Activated CD4-positive, alpha-beta memory T cell treated with anti-CD3 and anti-CD28 coated beads for 36 hours (primary cell): ENCODE measurements at regions of chr15 and their contacts with region 1.

Region 1: GRCh38 chr15:81265944-81266775 is 57.8 kb downstream of the STARD5 start:
- DNase-seq: peak; percentile 90
- H3K4me3 Mint-ChIP-seq: peak overlapping the region; percentile 54
- H3K27ac Mint-ChIP-seq: no peak overlapping the region
- H3K4me1 Mint-ChIP-seq: peaks cover 18% of the 10 kb centered on the region
- H3K27me3 Mint-ChIP-seq: peaks cover 8% of the 10 kb centered on the region

Region 2: DNA sequence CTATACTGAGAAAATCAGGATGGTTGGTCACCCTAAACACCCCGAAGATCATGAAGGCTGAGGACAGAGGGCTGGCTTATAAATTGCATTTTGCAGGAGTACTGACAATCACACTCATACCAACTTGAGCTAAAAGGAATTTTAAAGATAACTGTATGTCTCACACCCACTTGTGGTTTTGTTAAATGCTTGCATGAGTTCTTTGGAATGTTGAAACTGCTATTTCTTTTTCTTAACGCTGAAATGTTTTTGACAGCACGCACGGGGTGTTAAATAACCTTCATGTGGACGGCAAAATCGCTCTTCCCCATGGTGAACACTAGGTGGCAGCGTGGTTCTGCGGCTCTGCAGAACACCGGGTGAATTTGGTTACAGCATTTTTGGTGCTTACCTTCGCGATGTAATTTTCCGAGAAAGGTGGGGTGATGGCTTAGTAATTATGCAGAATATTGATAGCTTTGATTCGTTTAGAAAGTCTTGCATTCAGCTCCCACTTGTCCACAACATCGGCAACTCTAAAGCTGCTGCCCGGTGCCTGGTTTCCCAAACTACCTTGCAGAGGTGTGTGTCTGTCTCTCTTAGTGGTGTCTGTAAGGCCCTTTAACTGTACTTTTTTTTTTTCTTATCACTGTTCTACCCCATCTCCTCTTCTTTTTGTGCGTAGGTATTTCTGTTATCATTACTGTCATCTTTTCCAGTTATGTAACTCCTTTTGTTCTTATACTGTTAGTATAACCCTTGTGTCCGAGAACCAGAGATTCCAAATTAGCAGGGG is 810.3 kb before region 1 on chr15:
- CTCF ChIA-PET with region 1: interaction called, 10 read pairs
- POLR2A ChIA-PET with region 1: no interaction called
- intact Hi-C with region 1: loop called (anchors 2 kb)
- DNase-seq: peak; percentile 67
- H3K4me3 Mint-ChIP-seq: no peak overlapping the region
- H3K27ac Mint-ChIP-seq: no peak overlapping the region
- H3K4me1 Mint-ChIP-seq: peaks cover 5% of the 10 kb centered on the region
- H3K27me3 Mint-ChIP-seq: peaks cover 12% of the 10 kb centered on the region

Region 3: DNA sequence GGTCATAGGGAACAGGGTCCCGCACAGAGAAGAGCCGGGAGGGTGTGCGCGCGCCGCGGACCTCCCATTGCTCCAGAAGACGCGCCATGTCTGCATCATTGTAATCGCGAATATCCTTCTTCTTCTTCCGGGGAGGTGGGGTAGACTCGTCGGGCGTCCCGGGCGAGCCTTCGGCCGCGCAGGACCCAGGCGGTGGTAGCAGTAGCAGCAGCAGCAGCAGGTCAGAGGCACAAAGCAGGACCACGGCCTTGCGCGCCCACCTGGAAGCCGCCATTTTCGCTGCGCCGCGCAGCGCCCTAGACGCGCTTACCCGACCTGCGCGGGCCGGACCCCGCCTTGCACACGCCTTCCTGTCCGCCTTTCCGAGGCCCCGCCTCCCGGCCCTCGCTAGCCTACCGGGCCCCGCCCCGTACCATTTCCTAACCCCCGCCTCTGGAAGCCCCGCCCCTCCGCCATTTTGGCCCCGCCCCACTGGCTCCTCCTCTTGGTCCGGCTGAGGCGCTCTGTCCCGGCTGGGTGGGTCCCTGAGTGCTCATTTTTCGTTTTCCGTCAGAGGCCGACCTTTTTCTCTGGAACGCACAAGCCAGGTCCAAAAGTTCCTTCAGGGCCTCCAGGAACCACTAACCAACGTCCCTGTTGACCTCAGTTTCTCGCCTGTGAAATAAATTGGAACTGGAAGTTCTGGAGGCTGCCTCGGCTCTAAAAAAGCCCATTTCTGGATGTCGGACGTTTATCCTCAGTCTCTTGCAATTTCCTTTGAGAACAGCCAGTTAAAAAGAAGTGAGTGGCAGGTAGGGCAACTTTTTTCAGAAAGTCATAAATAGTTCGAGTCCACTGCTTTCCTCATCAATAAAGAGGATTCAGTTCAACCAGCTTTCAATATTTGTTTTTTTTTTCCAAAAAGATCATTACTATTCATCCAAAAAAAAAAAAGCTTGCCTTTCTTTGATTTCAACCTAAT is 276.4 kb before region 1 on chr15 and contains the start of gene MESD:
- CTCF ChIA-PET with region 1: interaction called, 27 read pairs
- POLR2A ChIA-PET with region 1: no interaction called
- intact Hi-C with region 1: no loop called
- DNase-seq: peak; percentile 99
- H3K4me3 Mint-ChIP-seq: peak within 1 kb of the TSS; percentile 98
- H3K27ac Mint-ChIP-seq: peak within 1 kb of the TSS; percentile 93
- H3K4me1 Mint-ChIP-seq: peaks cover 51% of the 10 kb centered on the region
- H3K27me3 Mint-ChIP-seq: no peaks in the 10 kb centered on the region
- total RNA-seq, gene MESD: 20.0 to 20.5 TPM

Region 4: GRCh38 chr15:81111510-81112470 is 154.4 kb before region 1 on chr15:
- CTCF ChIA-PET with region 1: interaction called, 217 read pairs
- POLR2A ChIA-PET with region 1: no interaction called
- intact Hi-C with region 1: loop called (anchors 1 kb)
- DNase-seq: no peak
- H3K4me3 Mint-ChIP-seq: no peak overlapping the region
- H3K27ac Mint-ChIP-seq: no peak overlapping the region
- H3K4me1 Mint-ChIP-seq: peaks cover 3% of the 10 kb centered on the region
- H3K27me3 Mint-ChIP-seq: peaks cover 28% of the 10 kb centered on the region

Region 5: GRCh38 chr15:81178365-81178764 is 87.8 kb before region 1 on chr15:
- CTCF ChIA-PET with region 1: interaction called, 11 read pairs
- POLR2A ChIA-PET with region 1: no interaction called
- intact Hi-C with region 1: no loop called
- DNase-seq: no peak
- H3K4me3 Mint-ChIP-seq: no peak overlapping the region
- H3K27ac Mint-ChIP-seq: no peak overlapping the region
- H3K4me1 Mint-ChIP-seq: no peaks in the 10 kb centered on the region
- H3K27me3 Mint-ChIP-seq: peaks cover 10% of the 10 kb centered on the region

Region 6: GRCh38 chr15:81323944-81324881 is 58.1 kb after region 1 on chr15 and contains the start of gene STARD5:
- CTCF ChIA-PET with region 1: interaction called, 24 read pairs
- POLR2A ChIA-PET with region 1: interaction called, 3 read pairs
- intact Hi-C with region 1: no loop called
- DNase-seq: peak; percentile 98
- H3K4me3 Mint-ChIP-seq: peak within 1 kb of the TSS; percentile 100
- H3K27ac Mint-ChIP-seq: peak within 1 kb of the TSS; percentile 76
- H3K4me1 Mint-ChIP-seq: peaks cover 24% of the 10 kb centered on the region
- H3K27me3 Mint-ChIP-seq: no peaks in the 10 kb centered on the region
- total RNA-seq, gene STARD5: 7.3 to 9.1 TPM

Region 7: DNA sequence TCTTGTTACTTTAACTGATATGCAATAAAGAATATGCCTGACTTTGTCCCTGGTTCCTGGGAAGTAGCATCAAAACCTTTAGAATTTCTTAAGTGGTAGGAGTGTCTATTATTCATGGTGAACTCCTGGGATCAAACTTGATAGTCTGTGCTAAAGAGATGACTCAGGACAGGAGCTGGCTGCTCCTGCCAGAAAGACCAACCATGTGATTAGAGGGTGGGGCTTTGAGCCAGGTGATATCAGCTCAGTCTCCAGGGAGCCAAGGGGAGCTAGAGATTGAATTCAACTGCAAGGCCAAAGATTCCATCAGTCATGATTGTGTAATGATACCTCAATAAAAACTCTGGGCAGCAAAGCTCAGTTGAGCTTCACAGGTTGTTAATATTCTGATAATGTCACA is 128.4 kb after region 1 on chr15:
- CTCF ChIA-PET with region 1: interaction called, 121 read pairs
- POLR2A ChIA-PET with region 1: no interaction called
- intact Hi-C with region 1: no loop called
- DNase-seq: no peak
- H3K4me3 Mint-ChIP-seq: no peak overlapping the region
- H3K27ac Mint-ChIP-seq: no peak overlapping the region
- H3K4me1 Mint-ChIP-seq: no peaks in the 10 kb centered on the region
- H3K27me3 Mint-ChIP-seq: no peaks in the 10 kb centered on the region